IMR-90 (cell line): ENCODE measurements at regions of chrX and their contacts with region 1.

Region 1: GRCh38 chrX:19372170-19372546 is 28.4 kb downstream of the PDHA1 start:
- DNase-seq: peak; percentile 59
- ATAC-seq: peak; percentile 79
- H3K4me3 ChIP-seq: peak overlapping the region; percentile 42
- H3K27ac ChIP-seq: no peak overlapping the region
- H3K4me1 ChIP-seq: peaks cover 3% of the 10 kb centered on the region
- H3K27me3 ChIP-seq: peaks cover 6% of the 10 kb centered on the region; the same call in 1 of the 2 replicates
- CTCF ChIP-seq: peak; percentile 79
- POLR2A ChIP-seq: no peak
- RAD21 ChIP-seq: peak; percentile 80

Region 2: GRCh38 chrX:18725310-18725943 is 646.7 kb before region 1 on chrX:
- CTCF ChIA-PET with region 1: no interaction called
- POLR2A ChIA-PET with region 1: no interaction called
- dilution Hi-C with region 1: no loop called
- in situ Hi-C with region 1: no loop called
- intact Hi-C with region 1: no loop called
- DNase-seq: no peak
- ATAC-seq: no peak
- H3K4me3 ChIP-seq: no peak overlapping the region
- H3K27ac ChIP-seq: no peak overlapping the region
- H3K4me1 ChIP-seq: no peaks in the 10 kb centered on the region
- H3K27me3 ChIP-seq: no peaks in the 10 kb centered on the region
- CTCF ChIP-seq: no peak
- POLR2A ChIP-seq: no peak
- RAD21 ChIP-seq: no peak

Region 3: GRCh38 chrX:19332983-19333382 is 39.2 kb before region 1 on chrX:
- CTCF ChIA-PET with region 1: no interaction called
- POLR2A ChIA-PET with region 1: no interaction called
- dilution Hi-C with region 1: no loop called
- in situ Hi-C with region 1: no loop called
- intact Hi-C with region 1: no loop called
- DNase-seq: peak; percentile 3
- ATAC-seq: peak; percentile 21; the same call in 1 of the 2 replicates
- H3K4me3 ChIP-seq: no peak overlapping the region
- H3K27ac ChIP-seq: no peak overlapping the region
- H3K4me1 ChIP-seq: no peaks in the 10 kb centered on the region
- H3K27me3 ChIP-seq: peaks cover 6% of the 10 kb centered on the region
- CTCF ChIP-seq: no peak
- POLR2A ChIP-seq: no peak
- RAD21 ChIP-seq: no peak

Region 4: DNA sequence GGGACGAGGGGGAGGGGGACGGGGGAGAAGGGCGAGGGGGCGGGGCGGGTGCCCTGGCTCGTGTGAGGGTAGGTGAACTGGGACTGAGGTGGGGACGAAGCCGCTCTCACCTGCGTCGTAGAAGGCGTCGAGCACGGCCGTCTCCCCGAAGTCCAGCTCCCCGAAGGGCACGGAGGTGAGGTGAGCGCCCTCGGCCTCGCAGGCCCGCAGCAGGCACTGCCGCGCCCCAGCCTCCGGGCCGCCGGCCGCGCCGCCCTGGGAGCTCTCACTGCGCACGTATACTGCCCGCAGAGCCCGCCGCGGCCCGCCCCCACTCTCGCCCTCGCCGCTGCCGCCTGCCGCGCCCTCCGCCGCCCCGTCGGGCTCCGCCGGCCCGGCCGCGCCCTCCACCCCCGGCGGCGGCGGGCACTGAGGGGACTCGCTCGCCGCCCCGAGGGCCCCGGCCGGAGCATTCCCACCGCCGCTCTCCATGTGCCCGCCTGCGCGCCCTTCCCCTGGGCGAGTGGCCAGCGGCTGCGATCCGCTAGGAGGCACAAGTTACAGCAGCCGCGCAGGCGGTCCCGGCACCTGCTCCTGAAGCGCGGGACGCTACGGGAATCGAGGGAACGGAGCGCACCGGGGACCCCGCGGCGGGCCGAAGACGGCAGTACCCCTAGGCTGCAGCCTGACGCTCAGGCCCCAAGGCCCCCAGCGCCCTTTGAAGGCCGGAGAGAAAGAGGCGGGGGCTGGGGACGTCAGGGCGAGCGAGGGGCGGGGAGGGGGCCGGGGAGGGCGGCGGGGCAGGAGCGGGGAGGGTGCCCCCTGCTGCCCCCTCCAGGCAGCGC is 142.8 kb after region 1 on chrX and contains the start of gene MAP3K15:
- CTCF ChIA-PET with region 1: no interaction called
- POLR2A ChIA-PET with region 1: no interaction called
- dilution Hi-C with region 1: no loop called
- in situ Hi-C with region 1: loop called (anchors 10 kb)
- intact Hi-C with region 1: no loop called
- DNase-seq: no peak
- ATAC-seq: peak; percentile 35; the same call in 1 of the 2 replicates
- H3K4me3 ChIP-seq: no peak within 1 kb of the TSS
- H3K27ac ChIP-seq: no peak within 1 kb of the TSS
- H3K4me1 ChIP-seq: no peaks in the 10 kb centered on the region
- H3K27me3 ChIP-seq: peaks cover 8% of the 10 kb centered on the region
- CTCF ChIP-seq: no peak
- POLR2A ChIP-seq: no peak
- RAD21 ChIP-seq: no peak
- total RNA-seq, gene MAP3K15: under 0.01 TPM in 2 replicates

Region 5: DNA sequence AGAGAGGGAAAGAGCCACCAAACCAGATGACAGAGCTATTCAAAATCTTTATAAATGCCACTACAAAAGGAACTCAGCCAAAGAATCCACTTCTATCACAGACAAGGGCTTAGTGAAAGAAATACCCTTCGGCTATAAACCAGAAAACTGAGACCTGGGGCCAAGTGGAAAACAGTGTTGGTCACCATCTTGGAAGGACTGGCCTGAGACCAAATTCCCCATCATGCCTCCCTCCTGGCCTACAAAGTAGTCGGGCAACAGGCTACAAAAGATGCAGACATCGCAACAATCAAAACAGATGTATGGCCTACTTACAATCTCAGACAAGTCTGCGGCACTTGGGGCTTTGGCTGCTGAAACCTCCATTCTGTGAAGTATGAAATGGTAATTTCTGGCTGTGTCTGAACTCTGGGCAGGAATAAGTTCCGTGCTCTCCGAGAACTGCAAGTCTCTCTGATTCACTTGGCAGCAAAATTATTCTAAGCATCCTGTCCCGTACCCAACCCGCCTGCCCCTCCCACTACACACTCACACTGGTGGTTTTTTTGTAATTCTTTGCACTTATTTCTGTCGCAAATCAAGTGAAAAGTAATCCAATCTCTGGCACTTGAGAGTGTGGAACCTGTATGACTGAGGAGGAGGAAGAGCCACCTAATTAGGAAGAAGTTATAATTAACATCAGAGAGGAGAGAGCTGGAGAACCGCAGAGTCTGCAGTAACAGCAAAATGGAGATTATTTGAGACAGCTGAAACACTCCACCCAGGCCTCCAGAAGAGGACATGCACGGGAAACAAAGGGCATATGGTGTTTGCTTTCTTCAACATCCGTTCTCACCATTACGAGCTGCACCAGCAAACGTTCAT is 427.4 kb after region 1 on chrX:
- CTCF ChIA-PET with region 1: no interaction called
- POLR2A ChIA-PET with region 1: no interaction called
- dilution Hi-C with region 1: no loop called
- in situ Hi-C with region 1: loop called (anchors 25 kb)
- intact Hi-C with region 1: no loop called
- DNase-seq: peak; percentile 31
- ATAC-seq: peak; percentile 37; the same call in 1 of the 2 replicates
- H3K4me3 ChIP-seq: no peak overlapping the region
- H3K27ac ChIP-seq: no peak overlapping the region
- H3K4me1 ChIP-seq: peaks cover 2% of the 10 kb centered on the region; the same call in 1 of the 2 replicates
- H3K27me3 ChIP-seq: no peaks in the 10 kb centered on the region
- CTCF ChIP-seq: no peak
- POLR2A ChIP-seq: no peak
- RAD21 ChIP-seq: no peak

Region 6: GRCh38 chrX:19990556-19991349 is 618.6 kb after region 1 on chrX and contains the start of gene BCLAF3:
- CTCF ChIA-PET with region 1: no interaction called
- POLR2A ChIA-PET with region 1: no interaction called
- dilution Hi-C with region 1: no loop called
- in situ Hi-C with region 1: loop called (anchors 25 kb)
- intact Hi-C with region 1: loop called (anchors 5 kb)
- DNase-seq: peak; percentile 79
- ATAC-seq: peak; percentile 97
- H3K4me3 ChIP-seq: peak within 1 kb of the TSS; percentile 83
- H3K27ac ChIP-seq: peak within 1 kb of the TSS; percentile 56
- H3K4me1 ChIP-seq: no peaks in the 10 kb centered on the region; the same call in 1 of the 2 replicates
- H3K27me3 ChIP-seq: no peaks in the 10 kb centered on the region; the same call in 1 of the 2 replicates
- CTCF ChIP-seq: peak; percentile 86
- POLR2A ChIP-seq: no peak
- RAD21 ChIP-seq: peak; percentile 53
- total RNA-seq, gene BCLAF3: 1.6 and 2.8 TPM in 2 replicates

Region 7: DNA sequence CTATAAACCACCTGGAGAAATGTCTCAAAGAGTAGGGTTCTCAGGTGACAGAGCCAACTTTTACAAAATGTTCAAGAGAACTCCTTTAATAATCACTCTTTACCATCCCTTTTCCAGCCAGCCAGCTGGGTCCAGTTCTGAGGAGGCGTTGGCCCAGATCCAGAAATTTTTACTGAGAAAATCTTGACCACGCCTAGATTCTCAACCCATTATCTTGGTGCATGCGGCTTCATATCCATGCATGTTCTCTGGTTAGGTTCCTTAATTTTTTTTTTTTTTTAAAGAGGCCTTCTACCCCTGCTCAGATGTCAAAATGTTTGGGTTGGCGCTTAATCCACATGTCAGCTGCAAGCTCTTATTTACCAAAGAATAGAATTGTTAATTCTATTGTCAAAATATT is 756.5 kb after region 1 on chrX:
- CTCF ChIA-PET with region 1: no interaction called
- POLR2A ChIA-PET with region 1: no interaction called
- dilution Hi-C with region 1: no loop called
- in situ Hi-C with region 1: no loop called
- intact Hi-C with region 1: loop called (anchors 10 kb)
- DNase-seq: no peak
- ATAC-seq: no peak
- H3K4me3 ChIP-seq: no peak overlapping the region
- H3K27ac ChIP-seq: no peak overlapping the region
- H3K4me1 ChIP-seq: no peaks in the 10 kb centered on the region
- H3K27me3 ChIP-seq: no peaks in the 10 kb centered on the region
- CTCF ChIP-seq: no peak
- POLR2A ChIP-seq: no peak
- RAD21 ChIP-seq: no peak